Heart right ventricle (tissue), 16 donors: ENCODE measurements at regions of chr5 and their contacts with region 1.

Region 1: DNA sequence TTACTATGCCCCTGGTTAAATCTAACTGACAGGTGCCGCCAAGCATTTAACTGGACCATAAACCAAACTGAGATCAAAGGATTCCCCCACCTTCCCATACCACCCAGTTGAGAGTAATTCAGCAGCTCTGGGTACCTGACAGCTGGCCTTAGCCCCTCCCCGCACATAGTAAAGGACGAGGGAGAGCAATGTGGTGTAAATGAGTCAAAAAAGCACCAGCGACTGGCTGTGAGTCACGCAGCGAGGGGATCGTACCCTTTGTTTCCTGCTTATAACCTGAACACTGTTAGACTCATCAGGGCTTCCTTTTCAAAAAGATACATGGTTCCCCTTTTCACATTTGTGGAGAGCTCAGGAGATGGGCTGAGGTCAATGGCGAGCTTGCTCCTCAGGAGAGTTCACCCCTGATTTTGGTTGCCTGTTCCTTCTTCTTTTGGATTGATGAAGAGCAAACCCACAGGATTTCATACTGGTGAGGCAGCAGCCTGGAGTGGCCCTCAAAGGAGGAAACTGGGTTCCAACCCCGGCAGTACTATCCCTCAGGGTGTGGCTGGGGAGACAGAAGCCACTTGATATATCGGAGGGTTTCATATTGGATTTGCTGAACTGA is 71.5 kb downstream of the ANKRD33B start:
- DNase-seq: no peak
- ATAC-seq: no peak
- H3K4me3 ChIP-seq: no peak overlapping the region
- H3K27ac ChIP-seq: peak overlapping the region in 1 of 10 donors; percentile 31
- H3K4me1 ChIP-seq: peaks cover 0 to 52% (median 0%) of the 10 kb centered on the region in 9 donors
- H3K27me3 ChIP-seq: peaks cover 0 to 2% (median 0%) of the 10 kb centered on the region in 7 donors
- CTCF ChIP-seq: no peak

Region 2: DNA sequence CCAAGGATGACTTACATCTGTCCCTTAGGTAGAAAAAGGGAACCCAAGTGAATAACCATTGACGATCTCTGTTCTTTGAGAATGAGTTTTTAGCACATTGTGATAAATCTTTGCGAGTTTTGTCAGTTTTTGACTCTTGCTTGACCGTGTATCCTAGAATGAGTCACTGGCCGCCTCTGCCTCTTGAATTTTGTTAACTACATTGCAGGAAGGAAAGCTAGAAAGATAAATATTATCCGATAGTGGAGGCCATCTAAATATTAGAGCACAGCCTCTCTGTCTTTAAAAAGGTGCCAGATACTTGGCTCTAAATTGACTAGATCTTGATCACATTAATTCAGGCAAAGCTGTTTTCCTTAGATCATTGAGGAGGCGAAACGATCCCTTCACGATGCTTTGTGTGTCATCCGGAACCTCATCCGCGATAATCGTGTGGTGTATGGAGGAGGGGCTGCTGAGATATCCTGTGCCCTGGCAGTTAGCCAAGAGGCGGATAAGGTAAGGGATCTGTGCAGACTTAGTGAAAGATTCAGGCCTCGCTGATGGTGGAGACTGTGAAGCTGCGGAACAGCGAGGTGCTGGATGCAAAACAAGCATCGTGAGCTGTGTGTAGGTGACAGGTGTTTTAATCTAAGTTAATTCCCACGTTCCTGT is 373.1 kb before region 1 on chr5:
- intact Hi-C with region 1: no loop called
- DNase-seq: no peak
- ATAC-seq: no peak
- H3K4me3 ChIP-seq: no peak overlapping the region
- H3K27ac ChIP-seq: no peak overlapping the region
- H3K4me1 ChIP-seq: peaks cover 0 to 3% (median 0%) of the 10 kb centered on the region in 9 donors
- H3K27me3 ChIP-seq: no peaks in the 10 kb centered on the region
- CTCF ChIP-seq: no peak

Region 3: GRCh38 chr5:10275991-10276390 is 359.4 kb before region 1 on chr5:
- intact Hi-C with region 1: loop called in 1 of 10 experiments (anchors 10 kb)
- DNase-seq: no peak
- ATAC-seq: peak in 2 of 8 donors; percentile 20 to 42
- H3K4me3 ChIP-seq: no peak overlapping the region
- H3K27ac ChIP-seq: no peak overlapping the region
- H3K4me1 ChIP-seq: no peaks in the 10 kb centered on the region
- H3K27me3 ChIP-seq: no peaks in the 10 kb centered on the region
- CTCF ChIP-seq: no peak

Region 4: GRCh38 chr5:10579536-10580521 is 55.5 kb before region 1 on chr5:
- intact Hi-C with region 1: no loop called
- DNase-seq: no peak
- ATAC-seq: no peak
- H3K4me3 ChIP-seq: no peak overlapping the region
- H3K27ac ChIP-seq: peak overlapping the region in 4 of 10 donors; percentile 31 to 89 (median 80)
- H3K4me1 ChIP-seq: peaks cover 5 to 84% (median 54%) of the 10 kb centered on the region in 9 donors
- H3K27me3 ChIP-seq: no peaks in the 10 kb centered on the region
- CTCF ChIP-seq: no peak

Region 5: DNA sequence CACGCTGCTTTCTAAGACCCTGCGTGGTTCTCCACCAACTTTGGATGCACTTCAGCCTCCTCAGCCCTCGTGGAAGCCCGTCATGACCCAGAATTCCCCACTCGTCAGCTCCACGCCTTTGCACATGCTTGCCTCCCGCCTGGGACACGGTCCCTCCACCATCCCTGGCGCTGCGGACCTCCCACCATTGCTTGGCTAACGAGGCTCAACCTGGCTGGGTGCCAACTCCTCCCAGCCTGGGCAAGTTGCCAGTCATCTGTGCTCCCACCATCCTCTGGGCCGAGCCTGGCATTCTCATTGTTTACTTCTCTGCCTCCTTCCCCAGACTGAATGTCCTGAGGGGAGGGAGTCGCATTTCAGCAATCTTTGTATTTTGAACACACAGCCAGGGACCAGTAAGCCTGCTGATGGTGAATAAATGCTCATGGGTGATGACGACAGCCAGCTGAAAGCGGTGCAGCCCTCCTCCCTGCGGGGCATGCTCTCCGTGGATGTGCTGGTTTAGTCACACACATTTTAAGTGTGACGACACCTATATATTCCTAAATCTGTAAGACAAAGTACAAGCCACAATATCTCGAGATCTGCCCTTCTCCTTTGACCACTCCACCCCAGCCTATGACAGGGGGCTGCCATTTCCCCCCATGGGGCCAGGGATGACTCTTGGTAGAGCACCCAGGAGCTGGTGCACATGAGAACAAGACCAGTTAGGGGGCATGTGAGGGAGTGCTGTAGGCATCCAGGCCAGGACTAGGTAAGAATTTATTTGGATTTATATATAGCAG is 33.9 kb before region 1 on chr5:
- intact Hi-C with region 1: no loop called
- DNase-seq: peak; percentile 90 to 92
- ATAC-seq: peak; percentile 87 to 94 (median 92)
- H3K4me3 ChIP-seq: peak overlapping the region in 5 of 10 donors; percentile 0 to 18 (median 16)
- H3K27ac ChIP-seq: peak overlapping the region; percentile 39 to 89 (median 80)
- H3K4me1 ChIP-seq: peaks cover 13 to 44% (median 26%) of the 10 kb centered on the region in 9 donors
- H3K27me3 ChIP-seq: no peaks in the 10 kb centered on the region
- CTCF ChIP-seq: no peak